CD4-positive, alpha-beta memory T cell (primary cell): ENCODE measurements at regions of chr2 and their contacts with region 1.

Region 1: DNA sequence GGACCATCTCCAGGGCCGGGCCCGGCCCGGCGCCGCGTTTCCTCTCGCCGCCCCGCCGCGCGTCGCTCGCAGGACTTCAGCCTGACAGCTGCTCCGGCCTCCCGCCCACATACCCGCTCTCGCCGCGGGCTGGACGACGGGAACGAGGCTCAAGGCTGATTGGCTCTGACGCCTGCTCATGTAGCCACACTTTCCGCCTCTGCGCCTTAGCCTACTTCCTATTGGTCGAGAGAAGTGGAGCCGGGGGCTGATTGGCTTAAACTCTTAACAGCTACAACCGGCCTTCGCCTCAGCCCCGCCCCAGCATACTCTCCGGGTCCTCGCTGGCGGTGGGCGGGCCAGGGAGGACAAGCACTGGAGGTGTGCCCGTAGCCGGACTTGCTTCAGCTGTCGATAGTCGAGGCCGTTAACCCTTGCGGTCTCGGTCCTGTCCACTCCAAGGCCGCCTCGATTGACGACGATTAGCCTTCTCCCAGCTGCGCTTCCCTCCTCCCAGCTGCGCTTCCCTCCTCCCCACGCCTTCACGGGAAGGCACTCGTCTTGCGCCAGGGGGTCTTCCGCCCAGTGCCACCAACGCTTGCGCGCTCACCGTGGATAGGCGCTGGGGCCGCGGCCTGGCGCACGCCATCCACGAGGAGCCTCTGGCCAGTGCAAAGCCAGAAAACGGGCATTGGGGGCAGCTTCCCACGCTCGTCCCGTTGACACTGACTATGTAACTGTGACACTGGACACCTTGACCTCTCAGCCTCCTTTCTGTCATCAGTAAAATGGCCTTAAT is at the start of gene PRADC1:
- DNase-seq: peak; percentile 92 to 97 (median 94)
- H3K4me3 ChIP-seq: peak within 1 kb of the TSS; percentile 86 to 99
- H3K4me3 Mint-ChIP-seq: peak within 1 kb of the TSS; percentile 91 to 99 (median 98)
- H3K27ac ChIP-seq: peak within 1 kb of the TSS; percentile 91
- H3K27ac Mint-ChIP-seq: peak within 1 kb of the TSS; percentile 83 to 97 (median 91)
- H3K4me1 ChIP-seq: peaks cover 33% of the 10 kb centered on the region
- H3K4me1 Mint-ChIP-seq: peaks cover 26 to 56% (median 34%) of the 10 kb centered on the region in 4 donors
- H3K27me3 ChIP-seq: no peaks in the 10 kb centered on the region
- H3K27me3 Mint-ChIP-seq: no peaks in the 10 kb centered on the region
- total RNA-seq, gene PRADC1: 7.0 to 7.4 TPM

Region 2: DNA sequence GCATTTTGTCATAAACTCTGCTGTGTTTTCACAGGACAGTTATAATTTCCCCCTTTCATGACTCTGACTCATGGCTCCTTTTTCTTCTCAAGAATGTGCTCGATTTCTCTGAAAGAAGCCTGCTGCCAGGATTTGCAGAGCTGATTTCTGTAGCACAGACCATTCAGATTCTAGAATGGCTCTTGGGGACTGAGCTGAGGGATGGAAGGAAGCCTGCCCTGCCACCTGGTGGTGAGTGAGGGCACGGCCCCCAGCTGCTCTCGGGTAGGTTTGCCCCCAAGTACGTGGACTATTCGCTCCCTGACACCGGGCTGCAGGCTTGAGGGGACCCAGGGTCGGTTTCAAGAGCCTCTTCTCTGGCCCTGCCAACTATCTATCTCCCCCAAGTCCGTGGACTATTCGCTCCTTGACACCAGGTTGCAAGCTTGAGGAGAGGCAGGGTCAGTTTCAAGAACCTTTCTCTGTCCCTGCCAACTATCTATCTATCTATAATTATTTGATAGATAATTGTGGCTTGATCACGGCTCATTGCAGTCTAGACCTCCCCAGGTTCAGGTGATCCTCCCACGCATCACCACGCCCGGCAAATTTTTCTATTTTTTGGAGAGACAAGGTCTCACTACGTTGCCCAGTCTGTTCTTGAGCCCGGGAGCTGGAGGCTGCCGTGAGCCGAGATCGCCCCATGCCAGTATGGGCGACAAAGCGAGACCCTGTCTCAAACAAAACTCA is 20.7 kb before region 1 on chr2:
- CTCF ChIA-PET with region 1: interaction called, 77 read pairs
- POLR2A ChIA-PET with region 1: interaction called, 51 read pairs
- intact Hi-C with region 1: loop called (anchors 1 kb)
- DNase-seq: peak; percentile 58 to 70 (median 65)
- H3K4me3 ChIP-seq: no peak overlapping the region
- H3K4me3 Mint-ChIP-seq: peak overlapping the region; percentile 45 to 83 (median 58)
- H3K27ac ChIP-seq: no peak overlapping the region
- H3K27ac Mint-ChIP-seq: peak overlapping the region in 5 of 7 donors; percentile 23 to 97 (median 76)
- H3K4me1 ChIP-seq: peaks cover 33% of the 10 kb centered on the region
- H3K4me1 Mint-ChIP-seq: peaks cover 25 to 38% (median 31%) of the 10 kb centered on the region in 4 donors
- H3K27me3 ChIP-seq: no peaks in the 10 kb centered on the region
- H3K27me3 Mint-ChIP-seq: peaks cover 8 to 9% of the 10 kb centered on the region in 2 donors

Region 3: DNA sequence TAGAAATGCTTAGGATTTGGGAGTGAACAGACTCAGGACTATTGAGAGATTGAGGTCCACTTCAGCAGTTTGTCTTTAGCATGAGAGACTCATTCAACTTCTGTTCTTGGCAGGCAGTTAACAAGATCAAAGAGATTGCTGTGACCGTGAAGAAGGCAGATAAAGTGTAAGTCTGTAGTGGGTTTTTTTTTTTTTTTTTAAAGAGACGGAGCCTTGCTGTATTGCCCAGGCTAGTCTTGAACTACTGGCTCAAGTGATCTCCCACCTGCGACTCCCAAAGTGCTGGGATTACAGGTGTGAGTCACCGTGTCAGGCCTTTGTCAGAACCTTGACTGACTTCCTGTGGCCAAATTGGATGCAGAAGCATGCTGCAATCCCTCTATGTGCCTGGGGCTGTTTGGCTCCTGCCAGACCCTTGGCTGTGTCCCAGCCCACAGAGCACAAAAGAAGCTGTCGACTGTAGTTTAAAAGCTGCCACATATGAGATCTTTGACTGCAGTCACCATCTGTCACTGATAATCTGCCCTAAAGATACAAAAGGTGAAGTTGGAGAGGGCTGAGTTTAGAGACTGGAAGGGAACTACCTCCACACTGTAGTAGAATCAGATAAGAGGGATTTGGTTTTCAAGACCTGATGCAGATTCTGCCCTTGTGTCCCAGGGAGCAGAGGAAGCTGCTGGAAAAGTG is 10.7 kb after region 1 on chr2:
- CTCF ChIA-PET with region 1: interaction called, 3 read pairs
- POLR2A ChIA-PET with region 1: interaction called, 20 read pairs
- intact Hi-C with region 1: no loop called
- DNase-seq: no peak
- H3K4me3 ChIP-seq: no peak overlapping the region
- H3K4me3 Mint-ChIP-seq: no peak overlapping the region
- H3K27ac ChIP-seq: no peak overlapping the region
- H3K27ac Mint-ChIP-seq: no peak overlapping the region
- H3K4me1 ChIP-seq: peaks cover 4% of the 10 kb centered on the region
- H3K4me1 Mint-ChIP-seq: peaks cover 1 to 8% (median 6%) of the 10 kb centered on the region in 4 donors
- H3K27me3 ChIP-seq: no peaks in the 10 kb centered on the region
- H3K27me3 Mint-ChIP-seq: no peaks in the 10 kb centered on the region

Region 4: GRCh38 chr2:73268830-73269685 is 35.7 kb after region 1 on chr2:
- CTCF ChIA-PET with region 1: interaction called, 6 read pairs
- POLR2A ChIA-PET with region 1: interaction called, 24 read pairs
- intact Hi-C with region 1: loop called (anchors 1 kb)
- DNase-seq: peak; percentile 77 to 82 (median 80)
- H3K4me3 ChIP-seq: peak overlapping the region in 1 of 2 donors; percentile 45
- H3K4me3 Mint-ChIP-seq: peak overlapping the region in 7 of 8 donors; percentile 25 to 70 (median 67)
- H3K27ac ChIP-seq: peak overlapping the region; percentile 46
- H3K27ac Mint-ChIP-seq: no peak overlapping the region
- H3K4me1 ChIP-seq: peaks cover 24% of the 10 kb centered on the region
- H3K4me1 Mint-ChIP-seq: peaks cover 18 to 27% (median 23%) of the 10 kb centered on the region in 4 donors
- H3K27me3 ChIP-seq: no peaks in the 10 kb centered on the region
- H3K27me3 Mint-ChIP-seq: no peaks in the 10 kb centered on the region

Region 5: GRCh38 chr2:73293534-73294171 is 60.3 kb after region 1 on chr2 and contains the start of gene EGR4:
- CTCF ChIA-PET with region 1: interaction called, 54 read pairs
- POLR2A ChIA-PET with region 1: interaction called, 18 read pairs
- intact Hi-C with region 1: no loop called
- DNase-seq: peak; percentile 90 to 97 (median 92)
- H3K4me3 ChIP-seq: peak within 1 kb of the TSS; percentile 55 to 71
- H3K4me3 Mint-ChIP-seq: peak within 1 kb of the TSS; percentile 64 to 87 (median 78)
- H3K27ac ChIP-seq: no peak within 1 kb of the TSS
- H3K27ac Mint-ChIP-seq: peak within 1 kb of the TSS in 4 of 7 donors; percentile 69 to 77 (median 72)
- H3K4me1 ChIP-seq: peaks cover 28% of the 10 kb centered on the region
- H3K4me1 Mint-ChIP-seq: peaks cover 6 to 22% (median 15%) of the 10 kb centered on the region in 4 donors
- H3K27me3 ChIP-seq: peaks cover 30% of the 10 kb centered on the region
- H3K27me3 Mint-ChIP-seq: peaks cover 37 to 42% of the 10 kb centered on the region in 2 donors
- total RNA-seq, gene EGR4: not detected

Region 6: GRCh38 chr2:73736855-73737779 is 503.8 kb after region 1 on chr2 and contains the start of gene TPRKB:
- CTCF ChIA-PET with region 1: interaction called, 3 read pairs
- POLR2A ChIA-PET with region 1: interaction called, 21 read pairs
- intact Hi-C with region 1: loop called (anchors 1 kb)
- DNase-seq: peak; percentile 93 to 95 (median 94)
- H3K4me3 ChIP-seq: peak within 1 kb of the TSS; percentile 43 to 74
- H3K4me3 Mint-ChIP-seq: peak within 1 kb of the TSS; percentile 90 to 98 (median 95)
- H3K27ac ChIP-seq: peak within 1 kb of the TSS; percentile 68
- H3K27ac Mint-ChIP-seq: peak within 1 kb of the TSS; percentile 85 to 96 (median 93)
- H3K4me1 ChIP-seq: peaks cover 24% of the 10 kb centered on the region
- H3K4me1 Mint-ChIP-seq: peaks cover 15 to 25% (median 19%) of the 10 kb centered on the region in 4 donors
- H3K27me3 ChIP-seq: no peaks in the 10 kb centered on the region
- H3K27me3 Mint-ChIP-seq: no peaks in the 10 kb centered on the region
- total RNA-seq, gene TPRKB: 31.7 to 33.0 TPM

Region 7: DNA sequence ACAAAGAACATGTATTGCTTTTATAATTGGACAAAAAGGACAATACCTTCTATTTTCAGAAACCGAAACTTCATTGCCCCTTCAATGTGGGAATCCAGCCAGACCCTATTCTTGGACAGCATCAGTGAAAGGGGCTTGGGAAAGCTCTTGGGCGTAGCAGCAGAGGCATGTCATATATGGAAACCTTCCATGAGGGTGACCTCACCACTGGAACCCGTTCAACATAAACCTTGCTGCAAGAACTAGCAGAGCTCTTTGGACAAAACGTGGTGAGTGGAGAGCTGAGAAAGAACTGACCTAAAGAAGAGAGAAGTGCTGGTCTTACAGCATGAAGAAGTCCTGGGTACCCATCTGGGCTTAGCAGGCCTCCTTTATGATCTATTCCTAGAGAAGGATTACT is 636.7 kb after region 1 on chr2:
- CTCF ChIA-PET with region 1: no interaction called
- POLR2A ChIA-PET with region 1: no interaction called
- intact Hi-C with region 1: no loop called
- DNase-seq: no peak
- H3K4me3 ChIP-seq: no peak overlapping the region
- H3K4me3 Mint-ChIP-seq: no peak overlapping the region
- H3K27ac ChIP-seq: no peak overlapping the region
- H3K27ac Mint-ChIP-seq: no peak overlapping the region
- H3K4me1 ChIP-seq: no peaks in the 10 kb centered on the region
- H3K4me1 Mint-ChIP-seq: no peaks in the 10 kb centered on the region
- H3K27me3 ChIP-seq: no peaks in the 10 kb centered on the region
- H3K27me3 Mint-ChIP-seq: no peaks in the 10 kb centered on the region